Activated CD4-positive, alpha-beta T cell treated with anti-CD3 and anti-CD28 coated beads for 36 hours (primary cell): ENCODE measurements at regions of chr6 and their contacts with region 1.

Region 1: GRCh38 chr6:7112741-7113313 is 5.1 kb downstream of the RREB1 start:
- DNase-seq: peak; percentile 65
- ATAC-seq: peak; percentile 56
- H3K4me3 Mint-ChIP-seq: peak overlapping the region; percentile 72
- H3K27ac Mint-ChIP-seq: peak overlapping the region; percentile 77
- H3K4me1 Mint-ChIP-seq: peaks cover 75% of the 10 kb centered on the region
- H3K27me3 Mint-ChIP-seq: no peaks in the 10 kb centered on the region

Region 2: DNA sequence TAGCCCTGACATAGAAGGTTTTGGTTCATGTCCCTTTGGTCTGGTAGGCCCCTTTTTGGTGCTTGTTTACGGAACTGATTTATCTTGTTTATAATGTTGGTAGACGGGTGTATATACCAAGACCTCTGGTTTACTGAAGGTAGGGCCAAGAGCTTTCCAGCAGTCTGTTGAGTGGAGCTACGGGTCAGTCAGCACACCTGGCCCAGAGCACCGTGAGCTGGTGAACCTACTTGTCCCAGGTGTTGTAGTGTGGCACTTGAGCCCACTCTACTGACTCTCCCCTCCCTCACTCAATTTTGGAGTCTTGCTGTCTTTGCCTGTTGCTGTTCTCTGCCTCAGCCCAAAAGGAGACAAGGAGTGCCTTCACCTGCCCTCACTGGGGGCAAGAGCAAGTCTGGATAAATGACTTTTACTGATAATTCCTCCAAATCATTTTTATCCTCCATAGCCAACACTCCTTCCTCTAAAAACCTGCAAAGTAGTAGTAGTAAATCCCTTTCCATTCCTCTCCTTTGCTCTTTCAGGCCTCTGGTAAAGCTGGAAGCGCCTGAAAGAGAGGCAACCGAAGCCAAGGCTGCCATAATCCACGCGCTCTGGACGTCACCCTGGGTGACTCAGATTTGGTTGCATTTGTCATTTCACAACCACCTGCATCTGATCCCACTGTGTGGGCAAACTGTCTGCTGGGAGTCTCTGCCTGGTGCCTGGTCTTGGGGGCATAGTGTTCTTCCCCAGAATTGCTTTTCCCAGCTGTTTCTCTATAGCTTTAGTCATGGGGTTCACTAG is 17.1 kb after region 1 on chr6:
- CTCF ChIA-PET with region 1: interaction called, 12 read pairs
- POLR2A ChIA-PET with region 1: interaction called, 5 read pairs
- intact Hi-C with region 1: no loop called
- DNase-seq: peak; percentile 79
- ATAC-seq: peak; percentile 85
- H3K4me3 Mint-ChIP-seq: peak overlapping the region; percentile 19
- H3K27ac Mint-ChIP-seq: peak overlapping the region; percentile 85
- H3K4me1 Mint-ChIP-seq: peaks cover 82% of the 10 kb centered on the region
- H3K27me3 Mint-ChIP-seq: no peaks in the 10 kb centered on the region

Region 3: GRCh38 chr6:8219352-8219943 is 1106.6 kb after region 1 on chr6:
- CTCF ChIA-PET with region 1: no interaction called
- POLR2A ChIA-PET with region 1: no interaction called
- intact Hi-C with region 1: no loop called
- DNase-seq: peak; percentile 57
- ATAC-seq: peak; percentile 39
- H3K4me3 Mint-ChIP-seq: no peak overlapping the region
- H3K27ac Mint-ChIP-seq: no peak overlapping the region
- H3K4me1 Mint-ChIP-seq: no peaks in the 10 kb centered on the region
- H3K27me3 Mint-ChIP-seq: peaks cover 5% of the 10 kb centered on the region